Right cardiac atrium (tissue), 5 donors: ENCODE measurements at regions of chr9 and their contacts with region 1.

Region 1: GRCh38 chr9:806285-807156 is 35.0 kb upstream of the DMRT1 start:
- DNase-seq: no peak
- ATAC-seq: peak in 1 of 2 donors; percentile 34
- H3K4me3 ChIP-seq: no peak overlapping the region
- H3K27ac ChIP-seq: no peak overlapping the region
- H3K4me1 ChIP-seq: no peaks in the 10 kb centered on the region
- H3K27me3 ChIP-seq: no peaks in the 10 kb centered on the region

Region 2: DNA sequence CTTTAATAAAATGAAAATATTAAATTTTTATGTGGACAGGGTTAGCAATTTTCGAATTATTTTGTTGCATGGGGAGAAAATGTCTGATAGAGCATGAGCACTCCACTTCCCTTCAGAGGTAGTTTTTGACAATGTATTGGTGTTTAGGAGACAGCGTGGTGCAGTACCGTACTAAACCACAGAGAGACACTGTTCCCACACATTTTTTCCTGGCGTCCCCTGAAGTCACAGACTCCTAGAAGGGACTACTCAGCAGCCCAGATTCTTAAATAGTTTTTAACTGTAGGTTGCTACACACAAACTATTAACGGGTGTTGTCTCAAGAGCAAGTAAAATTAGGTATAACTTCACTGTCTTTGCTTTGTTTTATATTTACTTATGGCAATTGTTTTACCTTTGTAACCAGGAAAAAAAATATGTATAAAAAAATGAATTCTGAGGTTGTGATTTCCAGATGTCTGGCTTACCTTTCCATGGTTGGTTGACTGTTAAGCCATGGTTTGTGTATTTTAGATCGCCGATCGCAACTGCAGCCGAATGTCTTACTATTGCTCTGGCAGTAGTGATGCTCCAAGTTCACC is 420.6 kb before region 1 on chr9:
- intact Hi-C with region 1: loop called in 2 of 4 experiments (anchors 10 kb)
- DNase-seq: peak in 2 of 3 donors; percentile 21 to 51
- ATAC-seq: peak; percentile 90 to 93
- H3K4me3 ChIP-seq: no peak overlapping the region
- H3K27ac ChIP-seq: no peak overlapping the region
- H3K4me1 ChIP-seq: no peaks in the 10 kb centered on the region
- H3K27me3 ChIP-seq: no peaks in the 10 kb centered on the region

Region 3: GRCh38 chr9:470552-471194 is 335.8 kb before region 1 on chr9:
- intact Hi-C with region 1: no loop called
- DNase-seq: peak in 2 of 3 donors; percentile 64 to 68
- ATAC-seq: peak; percentile 2 to 12
- H3K4me3 ChIP-seq: peak overlapping the region; percentile 68
- H3K27ac ChIP-seq: peak overlapping the region; percentile 90
- H3K4me1 ChIP-seq: peaks cover 2% of the 10 kb centered on the region
- H3K27me3 ChIP-seq: no peaks in the 10 kb centered on the region

Region 4: GRCh38 chr9:1151691-1152090 is 345.2 kb after region 1 on chr9:
- intact Hi-C with region 1: no loop called
- DNase-seq: no peak
- ATAC-seq: no peak
- H3K4me3 ChIP-seq: no peak overlapping the region
- H3K27ac ChIP-seq: no peak overlapping the region
- H3K4me1 ChIP-seq: no peaks in the 10 kb centered on the region
- H3K27me3 ChIP-seq: no peaks in the 10 kb centered on the region